A673 (cell line): ENCODE measurements at regions of chr1 and their contacts with region 1.

Region 1: DNA sequence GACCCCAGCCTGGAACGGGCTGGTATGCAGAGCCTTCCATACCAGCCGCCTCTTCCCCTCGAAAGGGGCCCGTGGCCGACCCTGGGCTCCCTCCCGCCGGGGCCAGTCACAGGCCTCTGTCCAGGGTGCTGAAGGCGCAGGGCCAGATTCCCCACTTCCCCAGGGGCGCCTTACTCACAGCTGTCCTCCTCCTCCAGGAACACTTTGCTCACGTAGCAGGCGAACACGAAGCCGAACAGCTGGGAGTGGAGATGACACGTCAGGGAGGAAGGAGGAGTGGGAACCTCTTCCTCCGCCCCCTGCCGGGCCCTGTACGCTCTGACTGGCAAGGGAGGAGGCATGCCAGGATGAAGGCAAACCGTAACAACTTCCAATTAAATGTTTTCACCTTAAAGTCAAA is 57.3 kb downstream of the NKAIN1 start:
- DNase-seq: peak; percentile 87
- H3K4me3 ChIP-seq: no peak overlapping the region
- H3K27ac ChIP-seq: no peak overlapping the region
- H3K4me1 ChIP-seq: peaks cover 9% of the 10 kb centered on the region
- H3K27me3 ChIP-seq: peaks cover 4% of the 10 kb centered on the region
- CTCF ChIP-seq: no peak; the same call in 1 of the 2 replicates

Region 2: DNA sequence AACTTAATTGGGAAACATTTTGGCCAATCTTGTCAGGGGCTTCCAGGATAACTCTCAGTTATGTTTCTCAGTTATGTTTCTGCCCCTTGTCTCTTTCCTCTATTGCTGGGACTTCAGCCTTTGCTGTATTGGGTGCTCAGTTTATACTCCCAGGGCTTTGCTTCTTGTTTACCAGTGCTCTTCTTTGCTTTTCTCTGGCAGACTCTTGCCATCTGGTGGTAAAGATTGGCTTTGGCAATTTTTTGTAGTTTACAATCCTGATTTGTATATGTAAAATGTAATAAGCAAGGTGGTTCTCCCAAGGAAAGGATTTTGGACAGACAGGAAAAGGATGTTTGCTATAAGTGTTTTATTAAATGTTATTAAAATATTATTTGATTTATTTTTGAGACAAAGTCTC is 152.7 kb after region 1 on chr1:
- CTCF ChIA-PET with region 1: interaction called, 4 read pairs
- POLR2A ChIA-PET with region 1: no interaction called
- intact Hi-C with region 1: loop called (anchors 1 kb)
- DNase-seq: peak; percentile 50
- H3K4me3 ChIP-seq: no peak overlapping the region
- H3K27ac ChIP-seq: no peak overlapping the region
- H3K4me1 ChIP-seq: no peaks in the 10 kb centered on the region
- H3K27me3 ChIP-seq: no peaks in the 10 kb centered on the region
- CTCF ChIP-seq: peak; percentile 57